Breast epithelium (tissue), 4 donors: ENCODE measurements at regions of chr3 and their contacts with region 1.

Region 1: GRCh38 chr3:120049881-120050539 is 44.2 kb downstream of the GSK3B start:
- DNase-seq: no peak
- H3K4me3 ChIP-seq: no peak overlapping the region
- H3K27ac ChIP-seq: no peak overlapping the region
- H3K4me1 ChIP-seq: peaks cover 0 to 10% of the 10 kb centered on the region in 2 donors
- H3K27me3 ChIP-seq: no peaks in the 10 kb centered on the region
- CTCF ChIP-seq: no peak
- POLR2A ChIP-seq: no peak

Region 2: GRCh38 chr3:119912220-119912619 is 137.8 kb before region 1 on chr3:
- intact Hi-C with region 1: no loop called
- DNase-seq: no peak
- H3K4me3 ChIP-seq: no peak overlapping the region
- H3K27ac ChIP-seq: no peak overlapping the region
- H3K4me1 ChIP-seq: no peaks in the 10 kb centered on the region
- H3K27me3 ChIP-seq: no peaks in the 10 kb centered on the region
- CTCF ChIP-seq: no peak
- POLR2A ChIP-seq: no peak

Region 3: GRCh38 chr3:119924111-119925094 is 125.6 kb before region 1 on chr3:
- intact Hi-C with region 1: no loop called
- DNase-seq: no peak
- H3K4me3 ChIP-seq: no peak overlapping the region
- H3K27ac ChIP-seq: no peak overlapping the region
- H3K4me1 ChIP-seq: no peaks in the 10 kb centered on the region
- H3K27me3 ChIP-seq: no peaks in the 10 kb centered on the region
- CTCF ChIP-seq: no peak
- POLR2A ChIP-seq: no peak

Region 4: GRCh38 chr3:120024103-120024502 is 25.9 kb before region 1 on chr3:
- intact Hi-C with region 1: loop called (anchors 1 kb)
- DNase-seq: no peak
- H3K4me3 ChIP-seq: no peak overlapping the region
- H3K27ac ChIP-seq: no peak overlapping the region
- H3K4me1 ChIP-seq: no peaks in the 10 kb centered on the region
- H3K27me3 ChIP-seq: no peaks in the 10 kb centered on the region
- CTCF ChIP-seq: no peak
- POLR2A ChIP-seq: no peak

Region 5: DNA sequence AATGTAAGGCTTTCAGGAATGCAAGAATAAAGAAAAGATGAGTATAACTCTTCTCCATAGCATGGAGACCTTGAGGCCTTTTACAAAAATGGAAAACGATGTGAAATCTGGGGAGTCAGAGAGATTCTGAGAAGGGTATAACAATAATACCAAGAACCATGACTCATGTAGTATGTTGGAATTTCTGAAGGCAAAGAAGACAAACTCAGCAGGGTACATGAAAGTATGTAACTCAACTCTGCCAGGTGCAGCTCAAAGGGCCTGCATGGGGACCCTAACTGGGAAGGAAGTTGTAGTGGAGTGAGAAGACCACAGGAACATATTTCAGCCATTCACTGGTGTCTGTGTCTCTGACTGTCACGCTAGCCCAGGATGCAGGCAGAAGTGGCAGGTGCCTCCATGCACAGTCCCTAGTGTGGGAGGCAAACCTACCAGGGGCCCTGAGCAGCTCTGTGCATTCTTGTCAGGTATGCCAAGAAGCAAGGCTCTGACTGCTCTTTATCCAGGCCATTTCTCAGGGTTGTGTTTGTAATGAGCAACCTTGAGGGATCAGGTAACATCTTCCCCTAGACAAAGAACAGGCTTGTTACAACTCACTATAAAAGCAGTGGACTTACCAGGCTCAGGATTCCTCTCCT is 177.8 kb after region 1 on chr3:
- intact Hi-C with region 1: no loop called
- DNase-seq: no peak
- H3K4me3 ChIP-seq: no peak overlapping the region
- H3K27ac ChIP-seq: no peak overlapping the region
- H3K4me1 ChIP-seq: no peaks in the 10 kb centered on the region
- H3K27me3 ChIP-seq: no peaks in the 10 kb centered on the region
- CTCF ChIP-seq: no peak
- POLR2A ChIP-seq: no peak

Region 6: GRCh38 chr3:120302361-120302760 is 252.4 kb after region 1 on chr3:
- intact Hi-C with region 1: no loop called
- DNase-seq: no peak
- H3K4me3 ChIP-seq: no peak overlapping the region
- H3K27ac ChIP-seq: no peak overlapping the region
- H3K4me1 ChIP-seq: no peaks in the 10 kb centered on the region
- H3K27me3 ChIP-seq: no peaks in the 10 kb centered on the region
- CTCF ChIP-seq: no peak
- POLR2A ChIP-seq: no peak